Mammary epithelial cell (primary cell): ENCODE measurements at regions of chr1 and their contacts with region 1.

Region 1: DNA sequence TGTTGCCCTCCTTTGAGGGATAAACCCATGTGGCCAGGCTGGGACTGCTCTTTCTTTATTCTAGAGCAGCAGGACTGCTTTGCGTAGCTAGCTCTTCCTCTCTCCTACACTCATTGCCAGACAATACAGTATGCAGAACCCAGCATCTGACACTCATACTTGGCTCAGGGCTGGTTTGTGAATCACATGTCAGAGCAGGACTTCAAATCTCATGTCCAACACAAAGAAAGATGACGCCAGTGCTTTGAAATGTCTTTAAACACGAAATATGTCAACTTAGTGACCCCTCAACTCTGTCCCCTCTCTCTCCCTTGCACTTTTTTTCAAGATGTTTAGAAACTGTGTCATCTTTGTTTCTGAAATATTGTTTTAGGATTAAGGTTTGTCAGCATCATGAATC is 135.0 kb downstream of the TGFB2 start:
- DNase-seq: peak; percentile 92
- H3K4me3 ChIP-seq: no peak overlapping the region
- H3K27ac ChIP-seq: peak overlapping the region; percentile 93
- H3K4me1 ChIP-seq: peaks cover 54% of the 10 kb centered on the region
- H3K27me3 ChIP-seq: no peaks in the 10 kb centered on the region
- CTCF ChIP-seq: no peak

Region 2: GRCh38 chr1:218377143-218377660 is 102.9 kb before region 1 on chr1:
- CTCF ChIA-PET with region 1: no interaction called
- dilution Hi-C with region 1: no loop called
- in situ Hi-C with region 1: no loop called
- intact Hi-C with region 1: loop called (anchors 1 kb)
- DNase-seq: peak; percentile 95
- H3K4me3 ChIP-seq: no peak overlapping the region
- H3K27ac ChIP-seq: peak overlapping the region; percentile 46
- H3K4me1 ChIP-seq: peaks cover 73% of the 10 kb centered on the region
- H3K27me3 ChIP-seq: no peaks in the 10 kb centered on the region
- CTCF ChIP-seq: no peak

Region 3: DNA sequence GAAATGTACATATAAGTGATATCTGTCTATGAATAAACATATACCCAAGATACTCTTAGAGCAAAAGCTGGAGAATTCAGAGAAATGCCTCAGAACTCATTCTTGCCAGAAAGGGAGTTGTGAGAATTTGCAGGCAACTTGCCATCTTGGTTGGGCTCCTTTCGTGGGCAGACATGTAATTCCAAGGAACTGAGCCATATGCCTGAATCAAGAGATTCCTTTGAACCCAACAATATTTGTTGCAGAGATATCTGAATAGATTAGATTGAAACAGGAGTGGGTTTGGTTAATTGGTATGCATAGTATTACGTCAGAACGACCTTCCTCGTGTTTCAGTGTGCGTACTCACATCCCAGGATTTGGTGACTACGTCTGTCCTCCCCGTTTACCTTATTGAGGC is 68.0 kb before region 1 on chr1:
- CTCF ChIA-PET with region 1: no interaction called
- dilution Hi-C with region 1: no loop called
- in situ Hi-C with region 1: no loop called
- intact Hi-C with region 1: no loop called
- DNase-seq: peak; percentile 40
- H3K4me3 ChIP-seq: no peak overlapping the region
- H3K27ac ChIP-seq: no peak overlapping the region
- H3K4me1 ChIP-seq: peaks cover 8% of the 10 kb centered on the region
- H3K27me3 ChIP-seq: no peaks in the 10 kb centered on the region
- CTCF ChIP-seq: no peak